ENCODE measurements at regions of chr3 and their contacts with region 1.

Region 1: DNA sequence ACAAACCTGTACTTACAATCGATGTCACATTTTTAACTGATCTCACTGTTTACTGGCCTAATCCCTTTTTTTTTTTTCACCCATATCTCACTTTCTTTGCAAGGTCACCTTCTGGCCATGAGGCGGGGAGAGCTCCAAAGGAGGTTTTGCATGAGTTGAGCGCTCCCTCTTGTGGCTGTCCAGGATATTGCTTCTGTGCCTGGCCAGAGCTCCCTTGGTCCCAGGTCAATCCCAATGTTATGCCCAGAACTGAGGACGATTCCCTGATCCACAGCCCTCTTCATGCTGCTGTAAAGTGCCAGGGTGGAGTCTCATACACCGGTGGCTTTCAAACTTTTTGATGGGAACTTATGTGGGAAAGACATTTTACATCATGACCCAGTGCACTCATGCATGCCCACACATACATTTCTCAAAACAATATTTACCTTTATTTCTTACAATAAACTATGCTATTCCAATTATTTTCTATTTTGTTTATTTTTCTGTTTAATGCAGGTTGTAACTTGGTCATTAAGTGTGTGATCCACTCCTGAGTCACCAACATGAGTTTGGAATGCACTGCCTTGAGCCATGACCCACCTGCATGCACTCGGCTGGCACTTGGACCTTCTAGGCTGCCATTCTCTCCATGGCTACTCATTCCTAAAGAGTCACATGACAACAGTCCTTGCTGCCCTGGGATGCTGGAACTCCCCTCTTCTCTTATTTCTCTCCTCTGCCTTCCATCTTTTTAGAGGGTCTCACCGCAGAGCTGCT is 9.6 kb upstream of the SST start:
- DNase-seq: peak; percentile 78
- ATAC-seq: peak; percentile 92

Region 2: DNA sequence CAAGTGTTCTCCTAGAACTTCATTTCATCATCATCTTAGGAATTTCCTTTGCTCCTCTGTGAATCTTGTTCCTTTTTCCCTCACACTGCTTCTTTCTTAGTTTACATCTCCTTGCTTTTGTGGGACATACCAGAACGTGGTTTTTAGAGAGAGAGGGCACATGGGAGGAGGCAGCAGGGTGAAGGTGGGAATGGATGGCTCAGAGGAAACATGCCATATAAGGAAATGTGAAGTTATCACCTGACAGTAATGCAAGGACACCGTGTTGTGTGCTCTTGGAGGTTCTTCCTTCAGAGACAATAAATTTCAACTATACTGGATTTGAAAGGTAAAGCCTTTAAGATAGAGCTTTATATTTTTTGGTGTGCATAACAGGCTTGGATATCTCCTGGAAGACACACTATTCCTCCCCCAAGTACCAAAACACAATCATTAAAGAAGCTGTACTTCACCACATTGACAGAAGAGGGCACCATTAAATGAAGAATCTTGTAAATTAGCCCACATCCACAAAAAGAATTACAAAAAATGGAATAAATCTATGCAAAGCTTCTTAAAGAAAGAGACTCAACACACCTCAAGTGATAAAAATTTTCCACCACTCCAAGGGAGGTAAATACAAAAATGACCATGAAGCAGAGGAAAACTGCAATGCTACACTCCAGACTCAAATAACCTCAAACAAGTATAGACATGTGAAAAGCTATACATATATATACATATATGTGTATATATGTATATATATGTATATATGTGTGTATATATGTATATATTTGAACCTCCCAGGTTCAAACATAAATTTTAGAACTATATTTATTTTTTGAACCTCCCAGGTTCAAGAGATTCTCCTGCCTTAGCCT is 566.7 kb before region 1 on chr3:
- intact Hi-C with region 1: loop called (anchors 10 kb)
- DNase-seq: no peak
- ATAC-seq: no peak

Region 3: DNA sequence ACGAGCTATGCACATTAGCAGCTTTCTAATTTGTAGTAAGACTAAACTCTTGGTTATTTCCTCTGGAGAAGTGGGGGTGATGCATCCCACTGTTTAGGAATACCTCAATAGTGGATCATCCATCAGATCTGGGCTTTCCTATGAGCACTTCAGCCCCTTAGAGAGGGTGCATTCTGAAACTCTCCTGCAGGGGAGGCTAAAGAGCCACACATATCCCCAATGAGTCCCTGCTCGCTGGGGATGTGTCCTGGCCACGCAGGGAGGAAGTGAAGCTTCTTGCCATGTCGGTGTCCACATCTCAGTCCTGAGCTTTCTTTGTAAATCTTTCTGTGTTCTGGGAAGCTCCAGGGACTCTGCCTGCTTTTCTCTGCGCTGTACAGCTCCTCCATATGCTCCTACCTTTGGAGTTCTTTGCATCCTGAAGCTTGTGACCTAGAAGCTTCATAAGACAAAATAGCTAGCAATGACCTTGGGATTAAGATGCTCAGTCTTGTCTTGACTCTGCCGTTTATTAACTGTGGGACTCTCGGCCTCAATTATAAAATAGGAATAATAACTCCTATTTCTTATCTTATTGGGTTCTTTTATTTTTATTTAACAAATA is 360.0 kb before region 1 on chr3:
- intact Hi-C with region 1: loop called (anchors 1 kb)
- DNase-seq: no peak
- ATAC-seq: peak; percentile 95

Region 4: DNA sequence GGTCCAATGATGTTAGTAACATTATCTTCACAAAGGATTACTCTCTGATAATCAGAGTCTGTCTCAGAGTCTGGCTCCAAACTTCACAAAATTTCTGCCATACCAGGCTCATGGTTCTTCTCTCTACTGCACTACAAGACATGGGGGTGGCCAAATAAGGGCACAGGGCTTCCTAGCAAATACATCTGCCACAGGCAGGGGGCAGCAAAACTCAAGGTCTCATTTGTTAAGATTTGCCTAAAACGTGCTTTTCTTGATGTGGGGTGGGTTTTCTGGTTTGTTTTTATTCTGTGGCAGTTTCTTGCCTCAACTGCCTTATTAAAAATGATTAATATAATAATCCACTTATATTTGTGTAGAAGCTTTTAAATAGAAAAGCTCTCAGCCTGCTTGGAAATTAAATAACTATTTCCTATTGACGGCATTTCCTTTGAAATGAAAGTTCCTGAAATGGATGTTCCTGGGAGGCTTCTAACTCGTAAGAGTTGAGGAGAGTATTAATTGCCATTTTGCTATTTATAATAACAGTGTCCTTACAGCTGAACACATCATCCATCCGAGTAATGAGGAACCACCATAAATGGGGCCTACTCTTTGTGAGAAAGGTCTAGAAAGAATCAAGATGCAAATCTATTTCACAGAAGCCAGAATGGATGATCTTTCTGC is 63.4 kb before region 1 on chr3:
- intact Hi-C with region 1: loop called (anchors 5 kb)
- DNase-seq: peak; percentile 68
- ATAC-seq: no peak

Region 5: DNA sequence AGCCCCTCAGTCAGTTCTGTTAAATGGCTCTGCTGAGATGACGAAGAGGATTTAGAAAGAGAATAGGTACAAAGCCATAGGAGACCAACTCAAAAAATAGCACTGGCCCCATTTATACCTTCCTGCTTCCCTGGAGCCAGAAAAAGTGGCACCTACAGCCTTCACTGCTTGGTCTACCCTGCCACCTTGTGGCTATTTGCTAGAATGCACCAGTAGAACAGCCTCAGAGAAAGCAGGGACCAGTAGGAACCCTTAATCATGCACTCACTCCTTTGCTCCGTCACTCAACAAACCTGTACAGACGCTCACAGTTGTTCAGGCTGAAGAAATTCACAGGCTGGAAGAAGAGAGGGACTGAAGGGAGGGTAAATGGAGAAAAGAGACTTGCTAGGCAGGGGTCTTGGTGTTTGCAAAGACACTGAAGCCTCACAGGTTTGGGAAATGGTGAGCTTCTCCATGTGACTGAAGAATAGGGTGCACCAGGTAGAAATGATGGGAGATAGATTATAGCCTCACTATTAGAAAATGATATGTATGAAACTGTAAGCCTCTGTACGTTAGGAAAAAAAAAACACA is 34.7 kb after region 1 on chr3:
- intact Hi-C with region 1: no loop called
- DNase-seq: no peak
- ATAC-seq: peak; percentile 86

Region 6: DNA sequence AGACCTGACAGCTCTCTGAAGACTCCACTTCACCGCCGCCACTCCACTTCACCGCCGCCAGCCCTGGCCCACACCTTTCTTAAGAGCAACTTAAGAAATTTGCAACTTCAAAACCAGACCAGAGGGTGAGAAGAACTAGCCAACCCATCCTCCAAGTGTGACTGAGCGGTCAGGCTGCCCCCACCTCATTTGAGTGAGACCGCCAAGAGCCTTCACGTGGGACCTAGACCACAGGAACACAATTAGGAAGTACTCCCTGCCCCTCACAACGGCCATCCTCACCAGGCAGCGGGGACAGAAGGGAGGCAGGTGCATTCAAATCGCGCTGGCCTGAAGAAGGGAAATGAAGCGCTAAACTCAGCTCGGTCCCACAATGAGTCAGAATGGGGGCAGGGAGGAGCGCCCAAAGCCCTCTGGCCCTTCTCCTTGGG is 222.2 kb after region 1 on chr3:
- intact Hi-C with region 1: no loop called
- DNase-seq: no peak
- ATAC-seq: no peak

Region 7: DNA sequence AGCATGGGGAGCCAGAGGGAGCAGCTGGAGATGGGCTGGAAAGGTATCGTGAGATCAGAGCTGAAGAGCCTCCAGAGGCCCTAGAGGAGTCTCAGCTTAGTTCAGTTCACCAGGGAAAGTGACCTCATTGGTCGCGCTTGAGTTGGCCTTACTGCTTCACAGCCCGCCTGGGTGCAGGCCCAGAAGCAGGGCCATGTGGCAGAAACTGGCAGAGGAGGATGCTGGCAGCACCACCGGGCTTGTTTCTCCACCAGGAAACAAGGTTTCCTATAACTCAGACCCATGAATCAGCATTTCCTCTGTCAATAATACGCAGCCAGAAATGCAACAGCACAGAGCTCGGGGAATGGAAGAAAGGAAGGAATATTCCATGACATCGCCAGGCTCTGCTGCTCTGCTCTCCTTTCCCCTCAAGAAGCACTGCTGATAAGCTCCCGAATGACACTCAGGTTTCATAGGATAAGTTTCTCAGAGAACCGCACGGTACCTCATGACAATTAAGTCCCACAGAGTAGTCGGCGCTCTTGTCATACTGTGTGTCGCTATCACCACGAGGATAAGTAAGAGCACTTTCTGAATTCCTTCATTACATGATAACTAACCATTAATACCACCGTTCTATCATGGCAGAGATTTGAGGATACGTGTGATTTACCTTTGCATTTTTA is 327.0 kb after region 1 on chr3:
- intact Hi-C with region 1: no loop called
- DNase-seq: no peak
- ATAC-seq: peak; percentile 42